ENCODE measurements at regions of chr15 and their contacts with region 1.

Region 1: GRCh38 chr15:59528965-59529402 is 82.6 kb upstream of the GCNT3 start:
- DNase-seq: peak; percentile 92
- ATAC-seq: peak; percentile 98
- H3K4me3 ChIP-seq: no peak overlapping the region
- H3K27ac ChIP-seq: no peak overlapping the region
- H3K4me1 ChIP-seq: peaks cover 8 to 9% of the 10 kb centered on the region in 2 experiments; a peak in 2 of 4 replicates
- H3K27me3 ChIP-seq: no peaks in the 10 kb centered on the region
- CTCF ChIP-seq: peak; percentile 77 to 90 (median 84)
- POLR2A ChIP-seq: no peak
- RAD21 ChIP-seq: peak; percentile 97

Region 2: DNA sequence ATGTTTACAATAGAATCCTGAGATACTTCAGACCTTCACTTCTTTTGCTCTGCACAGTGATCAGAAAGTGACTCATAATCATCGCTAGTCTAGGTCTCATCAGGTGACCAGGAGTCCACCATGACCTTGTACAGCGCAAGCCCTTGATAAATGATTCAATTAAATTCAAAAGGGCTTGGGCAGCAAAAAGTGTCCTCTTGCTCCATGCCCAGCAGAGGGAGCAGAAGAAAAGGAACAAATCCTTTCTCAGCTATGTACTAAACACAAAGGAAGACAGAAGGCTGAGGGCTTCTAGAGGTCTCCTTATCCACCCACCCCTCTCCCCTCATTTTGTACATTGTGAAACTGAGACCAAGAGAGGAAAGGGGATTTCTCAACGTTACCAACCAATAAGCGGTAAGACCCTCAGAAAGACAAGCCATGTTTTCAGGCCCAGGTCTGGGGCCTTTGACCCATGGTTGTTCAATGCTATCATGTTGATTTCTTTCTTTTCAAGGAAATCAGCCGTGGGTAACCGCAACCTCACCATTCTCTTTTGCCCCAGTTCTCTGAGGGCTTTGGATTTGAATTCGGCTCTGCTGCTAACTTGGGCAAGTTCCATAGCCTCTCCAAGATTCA is 1316.0 kb before region 1 on chr15:
- CTCF ChIA-PET with region 1: interaction called, 10 read pairs
- POLR2A ChIA-PET with region 1: no interaction called
- RAD21 ChIA-PET with region 1: no interaction called
- intact Hi-C with region 1: no loop called
- DNase-seq: no peak
- ATAC-seq: peak; percentile 85
- H3K4me3 ChIP-seq: no peak overlapping the region
- H3K27ac ChIP-seq: no peak overlapping the region
- H3K4me1 ChIP-seq: no peaks in the 10 kb centered on the region
- H3K27me3 ChIP-seq: no peaks in the 10 kb centered on the region
- CTCF ChIP-seq: peak; percentile 36 to 67 (median 64); a peak in 5 of 6 replicates
- POLR2A ChIP-seq: no peak
- RAD21 ChIP-seq: peak; percentile 53

Region 3: DNA sequence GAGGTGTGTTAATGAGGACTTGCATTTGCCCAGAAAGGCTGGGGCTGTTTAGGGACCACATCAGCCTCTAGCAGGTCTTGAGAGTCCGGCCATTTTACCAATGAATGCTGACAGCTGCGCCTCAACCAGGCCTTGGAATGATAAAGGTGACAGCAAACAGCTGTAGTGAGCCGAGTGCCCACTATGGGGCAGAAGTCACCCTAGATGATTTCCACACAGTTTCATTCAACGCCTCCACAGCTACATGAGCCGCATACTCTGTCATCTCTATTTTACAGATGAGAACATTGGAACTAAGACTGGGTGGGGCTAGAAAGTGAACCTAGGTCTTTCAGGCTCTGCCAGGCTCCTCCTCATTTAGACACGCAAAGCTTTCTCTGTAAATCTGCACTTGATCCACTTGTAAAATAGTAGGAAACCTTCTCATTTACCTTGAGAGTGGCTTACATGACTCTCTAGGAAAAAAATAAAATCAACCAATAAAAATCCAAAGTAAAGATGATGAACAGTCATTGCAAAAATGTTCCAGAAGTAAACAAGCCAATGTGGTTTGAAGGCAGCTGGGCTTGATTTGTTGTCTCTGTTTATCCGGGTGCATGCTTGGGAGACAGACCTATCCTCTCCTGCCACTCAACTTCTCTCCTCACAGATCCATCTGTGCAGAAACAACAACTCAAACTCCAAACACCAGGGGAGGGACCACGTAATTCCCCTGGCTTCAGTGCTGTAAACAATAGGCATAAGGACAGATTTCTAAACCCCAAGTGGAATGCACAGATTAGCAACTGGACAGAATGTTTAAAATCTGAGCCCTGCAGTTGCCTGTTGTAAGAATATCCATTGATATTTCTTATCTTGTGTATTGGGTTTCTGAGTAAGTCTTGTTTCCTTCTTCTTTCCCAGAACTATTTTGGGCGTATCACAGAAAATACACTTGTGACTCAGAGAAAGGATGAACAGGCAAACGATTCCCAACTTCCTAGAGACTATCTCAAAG is 353.9 kb before region 1 on chr15:
- CTCF ChIA-PET with region 1: interaction called, 12 read pairs
- POLR2A ChIA-PET with region 1: no interaction called
- RAD21 ChIA-PET with region 1: no interaction called
- intact Hi-C with region 1: no loop called
- DNase-seq: peak; percentile 74
- ATAC-seq: peak; percentile 96
- H3K4me3 ChIP-seq: no peak overlapping the region
- H3K27ac ChIP-seq: no peak overlapping the region; the same call in 1 of the 2 replicates
- H3K4me1 ChIP-seq: peaks cover 9 to 24% of the 10 kb centered on the region in 2 experiments
- H3K27me3 ChIP-seq: no peaks in the 10 kb centered on the region
- CTCF ChIP-seq: peak; percentile 70 to 74 (median 72)
- POLR2A ChIP-seq: no peak
- RAD21 ChIP-seq: peak; percentile 84

Region 4: DNA sequence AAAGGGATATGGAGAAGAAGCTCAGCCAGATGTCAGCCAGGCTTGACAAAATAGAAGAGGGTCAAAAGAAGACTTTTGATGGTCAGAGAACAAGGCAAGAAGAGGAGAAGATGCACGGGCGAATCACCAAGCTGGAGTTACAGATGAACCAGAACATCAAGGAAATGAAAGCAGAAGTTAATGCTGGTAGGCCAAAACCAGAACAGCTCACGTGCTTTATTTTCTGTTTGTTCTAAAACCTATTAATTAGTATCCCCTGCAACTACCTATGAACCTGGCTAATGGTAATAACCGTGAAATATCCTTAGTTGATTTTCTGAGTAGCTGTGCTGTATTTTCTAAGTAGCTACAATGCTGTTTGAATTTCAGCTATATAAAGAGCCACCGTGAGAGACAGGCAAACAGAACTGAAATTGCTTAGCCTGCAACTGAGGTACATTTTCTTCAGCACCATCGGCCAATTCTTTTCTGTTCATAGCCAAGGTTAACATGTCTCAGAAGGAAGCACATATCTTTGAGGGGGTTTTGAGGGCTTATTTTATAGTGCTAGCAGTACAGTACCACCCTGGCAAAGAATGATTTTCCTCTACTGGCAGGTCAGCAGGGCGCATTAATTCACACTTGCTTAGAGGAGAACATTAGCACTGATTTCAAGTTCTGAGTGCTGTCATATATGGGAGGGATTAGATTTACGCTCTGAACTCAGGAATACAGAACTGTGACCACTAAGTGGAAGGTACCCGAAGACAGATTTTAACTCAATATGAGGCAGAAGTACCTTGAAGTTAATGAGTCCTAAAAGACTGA is 12.1 kb before region 1 on chr15:
- CTCF ChIA-PET with region 1: interaction called, 20 read pairs
- POLR2A ChIA-PET with region 1: no interaction called
- RAD21 ChIA-PET with region 1: no interaction called
- intact Hi-C with region 1: no loop called
- DNase-seq: no peak
- ATAC-seq: no peak
- H3K4me3 ChIP-seq: no peak overlapping the region
- H3K27ac ChIP-seq: no peak overlapping the region
- H3K4me1 ChIP-seq: no peaks in the 10 kb centered on the region
- H3K27me3 ChIP-seq: no peaks in the 10 kb centered on the region
- CTCF ChIP-seq: no peak
- POLR2A ChIP-seq: no peak
- RAD21 ChIP-seq: no peak

Region 5: GRCh38 chr15:59622289-59622688 is 93.3 kb after region 1 on chr15:
- CTCF ChIA-PET with region 1: interaction called, 23 read pairs
- POLR2A ChIA-PET with region 1: interaction called, 5 read pairs
- RAD21 ChIA-PET with region 1: interaction called, 4 to 6 read pairs
- intact Hi-C with region 1: loop called (anchors 1 kb)
- DNase-seq: peak; percentile 42
- ATAC-seq: peak; percentile 100
- H3K4me3 ChIP-seq: no peak overlapping the region
- H3K27ac ChIP-seq: no peak overlapping the region
- H3K4me1 ChIP-seq: peaks cover 0 to 4% of the 10 kb centered on the region in 2 experiments; a peak in 2 of 4 replicates
- H3K27me3 ChIP-seq: no peaks in the 10 kb centered on the region
- CTCF ChIP-seq: peak; percentile 61 to 81 (median 70); a peak in 5 of 6 replicates
- POLR2A ChIP-seq: no peak
- RAD21 ChIP-seq: peak; percentile 79

Region 6: GRCh38 chr15:59642351-59642750 is 113.4 kb after region 1 on chr15:
- CTCF ChIA-PET with region 1: interaction called, 33 read pairs
- POLR2A ChIA-PET with region 1: no interaction called
- RAD21 ChIA-PET with region 1: interaction called, 3 read pairs
- intact Hi-C with region 1: no loop called
- DNase-seq: no peak
- ATAC-seq: no peak
- H3K4me3 ChIP-seq: no peak overlapping the region
- H3K27ac ChIP-seq: no peak overlapping the region
- H3K4me1 ChIP-seq: no peaks in the 10 kb centered on the region
- H3K27me3 ChIP-seq: no peaks in the 10 kb centered on the region
- CTCF ChIP-seq: peak; percentile 5 to 38 (median 8); a peak in 3 of 6 replicates
- POLR2A ChIP-seq: no peak
- RAD21 ChIP-seq: no peak; the same call in 1 of the 2 replicates

Region 7: DNA sequence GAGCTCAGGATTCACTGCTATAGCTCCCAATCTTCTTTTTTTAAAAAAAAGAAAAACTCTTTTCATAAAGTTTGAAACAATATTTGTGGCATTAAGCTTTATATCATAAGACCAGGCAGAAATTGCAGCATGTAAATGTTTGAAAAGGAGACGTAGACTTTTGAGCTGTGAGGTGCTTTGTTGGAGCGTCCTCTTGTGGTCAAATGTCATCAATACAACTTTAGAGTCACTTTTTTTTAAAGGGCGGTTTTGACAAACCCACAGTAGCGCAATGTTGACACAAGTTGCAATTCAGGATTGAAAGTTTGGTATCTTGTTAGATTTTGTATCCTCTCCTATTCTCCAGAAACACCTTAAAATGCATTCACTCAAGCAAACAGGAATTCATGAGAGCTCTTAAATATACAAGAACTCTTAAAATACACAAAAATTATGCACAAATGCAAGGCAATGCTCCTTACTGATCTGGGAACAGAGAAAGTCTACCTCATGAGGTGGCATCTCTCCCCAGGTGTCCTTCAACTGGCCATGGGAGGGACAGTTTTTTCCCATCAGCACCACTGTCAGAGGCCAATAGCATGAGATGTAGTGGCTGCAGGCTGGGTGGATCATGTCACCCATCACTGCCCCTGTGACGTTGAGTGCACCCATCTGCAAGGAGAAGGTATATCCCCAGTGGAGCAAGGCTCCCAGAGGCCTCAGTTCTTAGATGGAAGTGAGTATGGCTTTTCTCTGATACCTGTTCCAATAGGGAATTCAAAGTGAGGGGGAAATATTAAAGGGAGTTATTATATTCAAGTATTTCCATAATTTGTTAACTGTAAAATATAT is 798.1 kb after region 1 on chr15:
- CTCF ChIA-PET with region 1: no interaction called
- POLR2A ChIA-PET with region 1: no interaction called
- RAD21 ChIA-PET with region 1: interaction called in 1 of 2 experiments, 3 read pairs
- intact Hi-C with region 1: loop called (anchors 5 kb)
- DNase-seq: peak; percentile 47
- ATAC-seq: peak; percentile 74
- H3K4me3 ChIP-seq: no peak overlapping the region
- H3K27ac ChIP-seq: no peak overlapping the region
- H3K4me1 ChIP-seq: no peaks in the 10 kb centered on the region
- H3K27me3 ChIP-seq: peaks cover 42% of the 10 kb centered on the region
- CTCF ChIP-seq: peak; percentile 77 to 96 (median 83)
- POLR2A ChIP-seq: no peak
- RAD21 ChIP-seq: peak; percentile 91

Measured in HCT116 (cell line).